Psoas muscle (tissue), 8 donors: ENCODE measurements at regions of chr13 and their contacts with region 1.

Region 1: DNA sequence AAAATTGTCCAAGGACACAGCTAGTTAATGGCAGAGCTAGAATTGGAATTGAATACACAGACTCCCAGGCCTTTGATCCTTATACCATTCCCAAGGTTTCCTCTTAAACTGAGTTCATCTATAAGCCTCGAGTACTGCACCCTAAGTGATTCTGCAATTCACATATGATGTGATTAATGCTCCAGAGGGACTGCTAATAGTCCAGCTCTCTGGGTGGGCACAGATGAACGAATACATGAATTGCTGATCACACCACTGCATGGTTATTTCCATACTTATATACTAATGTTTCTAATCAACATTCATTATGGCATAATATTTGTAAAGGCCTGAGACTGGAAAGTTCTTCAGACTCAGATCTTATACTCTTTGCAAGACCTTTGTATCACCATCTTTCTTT is 101.8 kb downstream of the NUFIP1 start:
- DNase-seq: no peak
- ATAC-seq: no peak
- H3K4me3 ChIP-seq: no peak overlapping the region
- H3K27ac ChIP-seq: peak overlapping the region; percentile 37
- H3K4me1 ChIP-seq: no peaks in the 10 kb centered on the region
- H3K27me3 ChIP-seq: no peaks in the 10 kb centered on the region
- CTCF ChIP-seq: no peak

Region 2: DNA sequence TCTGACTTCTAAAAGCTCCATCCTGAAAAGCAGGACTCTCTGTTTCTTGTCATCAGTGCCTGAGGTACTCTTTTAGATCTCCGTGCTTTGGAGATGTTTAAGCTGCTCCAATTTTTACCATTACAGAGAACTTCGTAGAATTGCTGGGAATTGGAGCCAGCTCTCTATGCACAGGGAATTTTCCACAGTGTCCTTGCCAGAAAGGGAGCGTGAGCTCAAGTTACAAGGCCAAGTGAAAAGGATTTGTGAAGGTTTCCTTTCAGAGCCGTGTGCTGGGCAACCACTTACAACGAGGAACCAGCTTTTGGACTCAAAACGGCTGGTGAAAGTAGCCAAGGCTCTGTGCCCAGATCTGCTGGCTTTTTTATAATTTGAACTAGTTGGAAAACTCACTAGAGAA is 19.2 kb after region 1 on chr13:
- intact Hi-C with region 1: loop called in 1 of 2 experiments (anchors 2 kb)
- DNase-seq: no peak
- ATAC-seq: peak in 1 of 4 donors; percentile 40
- H3K4me3 ChIP-seq: peak overlapping the region; percentile 5
- H3K27ac ChIP-seq: peak overlapping the region; percentile 11
- H3K4me1 ChIP-seq: peaks cover 49% of the 10 kb centered on the region
- H3K27me3 ChIP-seq: no peaks in the 10 kb centered on the region
- CTCF ChIP-seq: no peak

Region 3: GRCh38 chr13:44955406-44955805 is 67.9 kb after region 1 on chr13:
- intact Hi-C with region 1: no loop called
- DNase-seq: no peak
- ATAC-seq: no peak
- H3K4me3 ChIP-seq: no peak overlapping the region
- H3K27ac ChIP-seq: no peak overlapping the region
- H3K4me1 ChIP-seq: peaks cover 26% of the 10 kb centered on the region
- H3K27me3 ChIP-seq: no peaks in the 10 kb centered on the region
- CTCF ChIP-seq: no peak

Region 4: DNA sequence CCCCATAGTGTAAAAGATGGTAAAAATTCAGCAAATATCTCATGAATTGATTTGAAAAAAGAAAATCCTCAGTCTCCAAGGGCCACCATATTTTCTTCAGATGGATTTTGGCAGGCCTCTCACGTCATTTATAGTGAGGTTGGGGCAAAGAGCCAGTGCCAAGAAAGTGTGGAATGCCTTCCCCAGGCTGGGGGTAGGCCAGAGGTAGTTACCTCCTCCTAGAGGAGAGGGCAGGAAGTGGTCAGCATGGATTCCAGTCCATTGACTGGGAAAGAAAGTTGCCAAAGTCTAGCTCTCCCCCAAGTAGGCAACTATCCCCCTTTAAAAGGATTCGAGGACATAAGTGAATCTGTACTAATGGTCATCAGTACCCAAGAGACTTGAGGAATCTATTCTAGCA is 381.7 kb after region 1 on chr13:
- intact Hi-C with region 1: no loop called
- DNase-seq: no peak
- ATAC-seq: no peak
- H3K4me3 ChIP-seq: no peak overlapping the region
- H3K27ac ChIP-seq: no peak overlapping the region
- H3K4me1 ChIP-seq: no peaks in the 10 kb centered on the region
- H3K27me3 ChIP-seq: no peaks in the 10 kb centered on the region
- CTCF ChIP-seq: no peak